ENCODE measurements at regions of chr22 and their contacts with region 1.

Region 1: GRCh38 chr22:24845041-24845898 is 39.3 kb downstream of the SGSM1 start:
- DNase-seq: peak in 2 of 3 donors; percentile 50 to 53
- ATAC-seq: peak; percentile 58 to 74
- H3K4me3 ChIP-seq: no peak overlapping the region
- H3K27ac ChIP-seq: no peak overlapping the region
- H3K4me1 ChIP-seq: no peaks in the 10 kb centered on the region
- H3K27me3 ChIP-seq: no peaks in the 10 kb centered on the region

Region 2: GRCh38 chr22:24768537-24769374 is 76.5 kb before region 1 on chr22:
- intact Hi-C with region 1: loop called in 3 of 4 experiments (anchors 5 kb)
- DNase-seq: peak; percentile 51 to 83 (median 59)
- ATAC-seq: peak; percentile 82 to 87
- H3K4me3 ChIP-seq: no peak overlapping the region
- H3K27ac ChIP-seq: no peak overlapping the region
- H3K4me1 ChIP-seq: no peaks in the 10 kb centered on the region
- H3K27me3 ChIP-seq: no peaks in the 10 kb centered on the region

Region 3: GRCh38 chr22:24805790-24806662 is 39.2 kb before region 1 on chr22 and contains the start of gene SGSM1:
- intact Hi-C with region 1: loop called in 1 of 4 experiments (anchors 5 kb)
- DNase-seq: peak; percentile 87 to 95 (median 95)
- ATAC-seq: peak; percentile 90 to 91
- H3K4me3 ChIP-seq: peak within 1 kb of the TSS; percentile 77
- H3K27ac ChIP-seq: peak within 1 kb of the TSS; percentile 61
- H3K4me1 ChIP-seq: peaks cover 19% of the 10 kb centered on the region
- H3K27me3 ChIP-seq: no peaks in the 10 kb centered on the region
- total RNA-seq, gene SGSM1: 16.0 to 47.5 (median 36.7) TPM

Region 4: DNA sequence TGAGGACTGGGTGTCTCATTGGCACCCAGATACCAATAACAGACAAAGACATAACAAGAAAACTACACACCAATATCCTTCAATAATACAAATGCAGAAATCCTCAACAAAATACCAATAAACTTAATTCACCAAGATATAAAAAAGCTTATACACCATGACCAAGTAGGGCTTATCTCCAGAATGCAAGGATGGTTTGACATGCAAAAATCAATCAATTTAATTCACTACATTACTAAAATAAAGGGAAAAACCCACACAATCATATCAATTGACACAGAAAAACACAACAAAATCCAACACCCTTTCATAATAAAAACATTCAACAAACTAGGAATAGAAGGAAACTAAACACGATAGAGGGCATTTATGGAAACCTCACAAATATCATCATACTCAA is 60.6 kb after region 1 on chr22:
- intact Hi-C with region 1: no loop called
- DNase-seq: no peak
- ATAC-seq: no peak
- H3K4me3 ChIP-seq: no peak overlapping the region
- H3K27ac ChIP-seq: no peak overlapping the region
- H3K4me1 ChIP-seq: no peaks in the 10 kb centered on the region
- H3K27me3 ChIP-seq: no peaks in the 10 kb centered on the region